ENCODE measurements at regions of chr20 and their contacts with region 1.

Region 1: GRCh38 chr20:51130731-51131130 is 107.8 kb upstream of the KCNG1 start:
- DNase-seq: peak in 1 of 2 experiments; percentile 31
- H3K4me3 ChIP-seq: no peak overlapping the region
- H3K4me3 Mint-ChIP-seq: no peak overlapping the region
- H3K27ac Mint-ChIP-seq: no peak overlapping the region
- H3K4me1 ChIP-seq: no peaks in the 10 kb centered on the region; the same call in 1 of the 2 replicates
- H3K4me1 Mint-ChIP-seq: peaks cover 5% of the 10 kb centered on the region
- H3K27me3 ChIP-seq: peaks cover 2% of the 10 kb centered on the region
- H3K27me3 Mint-ChIP-seq: peaks cover 12% of the 10 kb centered on the region
- CTCF ChIP-seq: no peak

Region 2: GRCh38 chr20:51335329-51335841 is 204.7 kb after region 1 on chr20:
- CTCF ChIA-PET with region 1: no interaction called
- POLR2A ChIA-PET with region 1: interaction called, 19 read pairs
- intact Hi-C with region 1: no loop called
- DNase-seq: no peak
- H3K4me3 ChIP-seq: no peak overlapping the region
- H3K4me3 Mint-ChIP-seq: no peak overlapping the region
- H3K27ac Mint-ChIP-seq: no peak overlapping the region
- H3K4me1 ChIP-seq: no peaks in the 10 kb centered on the region
- H3K4me1 Mint-ChIP-seq: no peaks in the 10 kb centered on the region
- H3K27me3 ChIP-seq: no peaks in the 10 kb centered on the region
- H3K27me3 Mint-ChIP-seq: peaks cover 4% of the 10 kb centered on the region
- CTCF ChIP-seq: no peak